Endothelial cell of umbilical vein (primary cell): ENCODE measurements at regions of chr16 and their contacts with region 1.

Region 1: DNA sequence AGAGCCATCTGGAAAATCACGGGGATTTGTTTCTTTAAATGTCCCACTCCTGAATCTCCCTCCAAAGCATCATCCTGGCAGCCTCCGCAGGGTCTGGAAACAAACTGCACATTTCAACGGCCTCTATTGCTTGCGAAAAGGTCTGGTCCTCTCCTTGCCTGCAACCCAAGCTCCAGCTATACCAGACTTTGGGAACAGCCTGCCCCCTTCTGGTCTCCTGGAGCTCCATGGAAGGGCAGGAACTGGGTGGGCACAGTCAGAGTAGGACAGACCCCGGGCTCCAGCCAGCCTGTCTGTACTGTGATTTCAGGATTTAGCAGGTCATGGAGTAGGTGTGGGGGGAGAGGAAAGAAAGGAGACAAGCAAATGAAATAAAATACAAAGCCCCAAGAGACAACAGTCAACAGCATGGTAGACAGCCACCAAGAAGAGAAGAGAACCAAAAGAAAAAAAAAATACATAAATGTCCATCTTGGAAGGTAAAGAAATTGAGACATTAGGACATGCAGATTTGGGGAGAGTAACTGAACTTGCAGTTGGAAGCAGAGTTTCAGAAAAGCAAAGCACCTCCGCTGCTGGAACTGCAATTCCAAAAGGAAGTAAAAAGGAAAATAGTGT is 2.7 kb downstream of the XYLT1 start:
- DNase-seq: no peak
- H3K4me3 ChIP-seq: no peak overlapping the region
- H3K27ac ChIP-seq: no peak overlapping the region
- H3K4me1 ChIP-seq: no peaks in the 10 kb centered on the region
- H3K27me3 ChIP-seq: peaks cover 19 to 20% of the 10 kb centered on the region in 2 experiments
- CTCF ChIP-seq: peak; percentile 58 to 61
- POLR2A ChIP-seq: no peak

Region 2: DNA sequence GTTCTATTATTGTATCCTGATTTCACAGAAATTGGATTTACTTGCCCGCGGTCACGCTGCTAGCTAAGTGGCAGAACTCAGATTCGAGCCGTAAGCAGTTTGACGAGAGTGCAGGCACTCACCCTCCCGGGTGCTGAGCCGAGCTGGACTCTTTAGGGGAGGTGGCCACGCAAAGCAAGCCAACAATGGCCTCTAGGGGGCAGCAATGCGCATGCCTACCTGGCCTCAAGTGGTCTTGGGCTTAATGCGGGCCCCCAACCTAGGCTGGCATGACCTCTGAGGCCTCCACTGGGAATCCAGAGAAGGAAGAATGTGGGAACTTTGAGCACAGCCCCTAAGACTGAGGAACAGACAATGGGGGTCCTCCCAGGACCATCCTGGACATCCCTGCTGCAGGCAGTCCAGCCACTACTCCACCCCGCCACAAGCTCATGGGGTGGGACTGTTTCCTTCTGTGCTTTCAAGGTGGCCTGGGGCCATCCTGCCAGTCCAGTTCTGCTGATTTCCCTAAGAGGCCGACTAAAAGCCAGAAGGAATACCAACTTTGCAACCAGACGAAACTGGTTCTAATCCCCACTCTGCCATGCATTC is 273.7 kb before region 1 on chr16:
- CTCF ChIA-PET with region 1: no interaction called
- POLR2A ChIA-PET with region 1: no interaction called
- dilution Hi-C with region 1: no loop called
- intact Hi-C with region 1: loop called (anchors 1 kb)
- DNase-seq: no peak
- H3K4me3 ChIP-seq: no peak overlapping the region
- H3K27ac ChIP-seq: no peak overlapping the region
- H3K4me1 ChIP-seq: no peaks in the 10 kb centered on the region
- H3K27me3 ChIP-seq: no peaks in the 10 kb centered on the region
- CTCF ChIP-seq: peak; percentile 7 to 18
- POLR2A ChIP-seq: no peak

Region 3: DNA sequence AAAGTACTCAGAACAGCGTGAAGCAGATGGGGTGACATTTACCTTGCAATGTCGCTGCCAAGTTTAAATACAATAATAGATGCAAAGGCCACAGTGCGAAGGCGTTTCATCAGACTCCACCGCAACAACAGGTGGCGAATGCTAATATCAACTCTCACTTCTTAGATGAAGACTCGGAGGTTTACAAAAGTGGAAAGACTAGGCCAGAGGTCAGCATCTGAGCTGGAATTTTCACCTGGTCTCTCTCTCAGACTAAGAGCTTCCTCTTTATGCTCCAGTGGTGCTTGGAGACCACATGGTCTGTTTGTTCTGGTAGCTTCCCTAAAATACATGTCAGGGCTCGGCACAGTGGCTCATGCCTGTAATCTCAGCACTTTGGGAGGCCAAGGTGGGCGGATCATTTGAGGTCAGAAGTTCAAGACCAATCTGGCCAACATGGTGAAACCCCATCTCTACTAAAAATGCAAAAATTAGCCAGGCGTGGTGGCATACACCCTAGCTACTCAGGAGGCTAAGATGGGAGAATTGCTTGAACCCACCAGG is 166.4 kb before region 1 on chr16:
- CTCF ChIA-PET with region 1: no interaction called
- POLR2A ChIA-PET with region 1: no interaction called
- dilution Hi-C with region 1: no loop called
- intact Hi-C with region 1: loop called (anchors 10 kb)
- DNase-seq: no peak
- H3K4me3 ChIP-seq: no peak overlapping the region
- H3K27ac ChIP-seq: no peak overlapping the region
- H3K4me1 ChIP-seq: no peaks in the 10 kb centered on the region
- H3K27me3 ChIP-seq: no peaks in the 10 kb centered on the region
- CTCF ChIP-seq: no peak
- POLR2A ChIP-seq: no peak

Region 4: DNA sequence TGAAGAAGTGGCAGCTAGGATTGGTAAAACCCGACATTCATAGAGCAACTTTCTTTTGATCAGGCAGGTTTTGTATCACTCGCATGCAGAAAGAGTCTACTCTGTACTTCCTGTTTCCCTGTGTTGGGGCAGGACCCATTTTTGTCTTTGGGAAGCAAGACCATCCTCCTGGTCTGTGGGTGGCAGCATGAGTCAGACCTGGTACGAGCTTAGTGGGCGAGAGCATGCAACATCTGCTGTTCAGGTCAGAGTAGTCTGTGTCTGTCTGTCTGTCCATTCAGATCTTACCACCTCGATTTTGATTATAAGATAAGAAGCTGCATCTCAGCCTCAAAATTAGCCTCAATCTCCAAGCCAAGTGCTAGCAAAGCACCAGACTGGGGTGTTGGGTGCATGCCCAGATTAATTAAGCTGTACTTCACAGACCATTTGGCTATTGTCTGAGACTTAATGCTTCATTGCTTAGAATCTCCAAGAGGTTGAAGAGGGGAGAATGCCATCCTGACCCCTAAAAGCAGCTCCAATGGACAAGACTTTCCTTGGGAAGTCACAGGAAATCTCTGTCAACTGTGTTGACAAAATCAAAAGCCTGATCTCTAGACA is 108.1 kb before region 1 on chr16:
- CTCF ChIA-PET with region 1: no interaction called
- POLR2A ChIA-PET with region 1: no interaction called
- dilution Hi-C with region 1: no loop called
- intact Hi-C with region 1: loop called (anchors 10 kb)
- DNase-seq: no peak
- H3K4me3 ChIP-seq: no peak overlapping the region
- H3K27ac ChIP-seq: no peak overlapping the region
- H3K4me1 ChIP-seq: peaks cover 24% of the 10 kb centered on the region
- H3K27me3 ChIP-seq: no peaks in the 10 kb centered on the region
- CTCF ChIP-seq: no peak
- POLR2A ChIP-seq: no peak

Region 5: GRCh38 chr16:17397499-17397891 is 70.5 kb before region 1 on chr16:
- CTCF ChIA-PET with region 1: no interaction called
- POLR2A ChIA-PET with region 1: no interaction called
- dilution Hi-C with region 1: no loop called
- intact Hi-C with region 1: loop called (anchors 5 kb)
- DNase-seq: peak; percentile 79
- H3K4me3 ChIP-seq: no peak overlapping the region
- H3K27ac ChIP-seq: peak overlapping the region; percentile 94
- H3K4me1 ChIP-seq: peaks cover 25% of the 10 kb centered on the region
- H3K27me3 ChIP-seq: no peaks in the 10 kb centered on the region
- CTCF ChIP-seq: no peak
- POLR2A ChIP-seq: no peak

Region 6: DNA sequence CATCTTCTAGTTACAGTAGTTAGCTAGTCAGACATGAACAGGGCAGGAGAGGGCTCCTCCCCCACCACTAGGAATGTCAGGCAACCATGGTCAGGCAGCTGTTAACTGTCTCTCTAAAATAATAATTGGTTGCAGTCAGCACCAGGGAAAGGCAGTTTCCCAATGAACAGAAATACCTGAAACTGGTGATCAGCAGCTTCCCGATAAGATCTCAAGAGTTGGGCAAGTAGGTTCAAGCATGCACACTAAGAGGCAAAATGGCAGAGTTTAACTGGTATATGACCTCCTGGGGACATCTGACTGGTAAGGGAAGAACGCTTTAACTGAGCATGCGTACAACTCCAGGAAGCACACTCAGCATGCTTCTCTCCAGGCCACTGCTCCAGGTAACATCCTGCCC is 15.3 kb after region 1 on chr16:
- CTCF ChIA-PET with region 1: no interaction called
- POLR2A ChIA-PET with region 1: no interaction called
- dilution Hi-C with region 1: no loop called
- intact Hi-C with region 1: no loop called
- DNase-seq: no peak
- H3K4me3 ChIP-seq: no peak overlapping the region
- H3K27ac ChIP-seq: no peak overlapping the region
- H3K4me1 ChIP-seq: no peaks in the 10 kb centered on the region
- H3K27me3 ChIP-seq: no peaks in the 10 kb centered on the region
- CTCF ChIP-seq: no peak
- POLR2A ChIP-seq: no peak

Region 7: DNA sequence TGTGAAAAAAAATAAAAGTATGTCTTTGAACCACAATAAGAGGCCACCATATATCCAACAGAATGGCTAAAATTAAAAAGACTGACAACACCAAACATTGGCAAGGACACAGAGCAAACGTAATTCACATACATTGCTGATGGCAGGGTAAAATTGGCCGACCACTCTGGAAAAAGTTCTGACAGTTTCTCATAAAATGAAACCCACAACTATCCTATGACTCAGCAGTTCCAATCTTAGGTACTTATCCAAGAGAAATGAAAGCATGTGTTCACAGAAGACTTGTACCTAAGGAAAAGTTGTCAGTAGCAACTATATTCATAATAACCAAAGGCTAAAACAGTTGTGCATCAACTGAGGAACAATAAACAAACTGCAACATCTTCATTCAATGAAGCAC is 360.0 kb after region 1 on chr16:
- CTCF ChIA-PET with region 1: no interaction called
- POLR2A ChIA-PET with region 1: no interaction called
- dilution Hi-C with region 1: no loop called
- intact Hi-C with region 1: no loop called
- DNase-seq: no peak
- H3K4me3 ChIP-seq: no peak overlapping the region
- H3K27ac ChIP-seq: no peak overlapping the region
- H3K4me1 ChIP-seq: no peaks in the 10 kb centered on the region
- H3K27me3 ChIP-seq: no peaks in the 10 kb centered on the region
- CTCF ChIP-seq: no peak
- POLR2A ChIP-seq: no peak